HepG2 (cell line): ENCODE measurements at regions of chr18 and their contacts with region 1.

Region 1: DNA sequence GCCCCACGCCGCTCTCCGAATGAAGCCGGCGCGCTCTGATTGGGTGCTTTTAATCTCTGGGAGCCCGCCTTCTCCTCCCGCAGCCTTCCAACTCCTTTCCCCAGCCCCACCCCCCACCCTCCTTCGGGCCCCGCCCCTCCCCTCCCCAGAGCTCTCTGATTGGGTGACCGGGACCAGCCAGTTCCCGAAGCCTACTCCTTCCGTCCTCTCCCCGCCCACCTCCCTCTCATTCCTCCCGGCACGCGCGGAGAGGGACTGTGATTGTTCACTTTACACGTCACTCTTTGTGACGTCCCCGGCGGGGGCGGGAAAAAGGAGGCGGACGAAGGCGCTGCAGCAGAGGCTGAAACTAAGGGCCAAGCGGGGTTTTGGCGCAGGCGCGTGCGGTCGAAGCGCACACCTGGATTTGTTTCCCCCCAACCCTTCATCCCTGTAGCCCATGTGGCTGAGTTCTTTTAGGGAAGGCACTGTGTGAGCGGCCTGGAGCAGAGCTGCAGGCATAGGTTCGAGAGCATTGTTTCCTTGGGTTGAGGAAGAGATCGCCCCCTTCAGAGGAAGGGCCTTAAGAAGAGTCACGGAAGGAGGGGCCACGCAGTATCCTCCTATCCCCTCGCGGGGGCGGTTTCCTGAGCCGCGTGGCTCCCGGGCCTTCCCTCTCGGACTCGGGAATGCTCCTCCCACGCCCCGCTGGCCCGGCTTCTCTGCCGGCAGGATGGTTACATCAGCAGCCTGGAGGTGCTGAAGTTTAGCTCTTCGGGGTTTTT is at the start of gene MEX3C:
- DNase-seq: peak; percentile 97
- ATAC-seq: peak; percentile 84
- H3K4me3 ChIP-seq: peak within 1 kb of the TSS; percentile 75 to 99 (median 90)
- H3K27ac ChIP-seq: peak within 1 kb of the TSS; percentile 97
- H3K4me1 ChIP-seq: peaks cover 21% of the 10 kb centered on the region
- H3K27me3 ChIP-seq: no peaks in the 10 kb centered on the region
- CTCF ChIP-seq: peak; percentile 56; the same call in 1 of the 2 replicates
- EP300 ChIP-seq: no peak
- POLR2A ChIP-seq: peak; percentile 91 to 93
- RAD21 ChIP-seq: no peak; the same call in 1 of the 2 replicates
- total RNA-seq, gene MEX3C: 36.4 and 36.7 TPM in 2 replicates

Region 2: DNA sequence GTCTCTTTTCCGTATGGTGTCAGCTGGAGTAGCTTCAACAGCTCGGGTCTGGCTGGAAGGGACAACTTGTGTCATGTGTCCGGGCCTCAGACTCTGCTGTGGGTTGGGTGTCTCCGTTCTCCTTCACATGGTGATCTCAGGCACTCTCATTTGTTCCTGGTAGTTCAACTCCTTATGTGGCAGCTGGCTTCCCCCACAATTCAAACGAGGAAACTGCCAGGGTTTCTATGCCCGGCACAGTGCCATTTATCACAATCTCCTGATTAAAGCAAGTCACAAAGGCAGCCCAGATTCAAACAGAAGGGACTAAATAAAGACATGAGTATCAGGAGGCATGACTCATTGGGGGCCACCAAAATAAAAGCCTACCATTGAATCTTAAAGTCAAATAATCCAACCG is 400.7 kb before region 1 on chr18:
- CTCF ChIA-PET with region 1: no interaction called
- POLR2A ChIA-PET with region 1: no interaction called
- in situ Hi-C with region 1: no loop called
- intact Hi-C with region 1: no loop called
- DNase-seq: no peak
- ATAC-seq: no peak
- H3K4me3 ChIP-seq: no peak overlapping the region
- H3K27ac ChIP-seq: no peak overlapping the region
- H3K4me1 ChIP-seq: peaks cover 5% of the 10 kb centered on the region; the same call in 1 of the 2 replicates
- H3K27me3 ChIP-seq: no peaks in the 10 kb centered on the region
- CTCF ChIP-seq: no peak
- EP300 ChIP-seq: no peak
- POLR2A ChIP-seq: no peak
- RAD21 ChIP-seq: no peak

Region 3: DNA sequence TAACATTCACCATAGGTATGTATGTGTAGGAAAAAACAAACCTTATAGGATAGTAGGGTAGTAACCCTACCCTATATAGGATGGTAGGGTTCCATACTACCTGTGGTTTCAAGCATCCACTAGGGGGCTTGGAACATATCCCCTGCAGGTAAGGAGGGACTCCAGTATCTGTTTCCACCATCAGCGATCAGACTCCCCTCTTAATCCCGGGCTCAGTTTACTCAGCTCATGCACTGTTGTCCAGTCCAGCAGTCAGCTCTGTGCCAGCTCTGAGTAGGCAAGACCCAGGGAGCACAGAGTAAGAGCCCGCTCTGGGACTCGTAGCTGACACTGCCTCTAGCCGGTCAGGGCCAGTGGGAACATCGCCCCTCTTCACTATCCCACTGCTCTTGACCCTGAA is 62.0 kb before region 1 on chr18:
- CTCF ChIA-PET with region 1: no interaction called
- POLR2A ChIA-PET with region 1: interaction called, 5 read pairs
- in situ Hi-C with region 1: no loop called
- intact Hi-C with region 1: loop called (anchors 5 kb)
- DNase-seq: peak; percentile 23
- ATAC-seq: peak; percentile 75
- H3K4me3 ChIP-seq: no peak overlapping the region
- H3K27ac ChIP-seq: no peak overlapping the region
- H3K4me1 ChIP-seq: peaks cover 34% of the 10 kb centered on the region
- H3K27me3 ChIP-seq: peaks cover 1 to 4% of the 10 kb centered on the region in 2 experiments; a peak in 2 of 5 replicates
- CTCF ChIP-seq: peak; percentile 56
- EP300 ChIP-seq: no peak
- POLR2A ChIP-seq: no peak
- RAD21 ChIP-seq: no peak

Region 4: DNA sequence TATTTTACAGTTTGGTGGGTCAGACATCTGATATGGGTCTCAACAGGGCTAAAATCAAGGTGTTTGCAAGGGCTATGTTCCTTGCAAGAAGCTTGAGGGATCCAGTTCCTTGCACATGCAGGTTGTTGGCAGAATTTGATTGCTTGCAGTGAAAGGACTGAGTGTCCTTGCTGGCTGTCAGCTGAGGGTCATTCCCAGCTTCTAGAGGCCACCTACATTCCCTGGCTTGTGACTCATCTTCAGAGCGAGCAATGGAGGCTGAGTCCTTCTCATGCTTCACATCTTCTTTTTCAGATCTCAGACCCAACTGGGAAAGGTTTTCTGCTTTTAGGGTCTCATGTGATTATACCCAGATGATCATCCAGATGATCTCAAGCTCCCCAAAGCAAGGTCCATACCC is 12.8 kb before region 1 on chr18:
- CTCF ChIA-PET with region 1: no interaction called
- POLR2A ChIA-PET with region 1: interaction called, 17 read pairs
- in situ Hi-C with region 1: no loop called
- intact Hi-C with region 1: no loop called
- DNase-seq: no peak
- ATAC-seq: peak; percentile 47; the same call in 2 of the 3 replicates
- H3K4me3 ChIP-seq: no peak overlapping the region
- H3K27ac ChIP-seq: no peak overlapping the region
- H3K4me1 ChIP-seq: peaks cover 20% of the 10 kb centered on the region
- H3K27me3 ChIP-seq: no peaks in the 10 kb centered on the region
- CTCF ChIP-seq: no peak
- EP300 ChIP-seq: no peak
- POLR2A ChIP-seq: no peak
- RAD21 ChIP-seq: no peak

Region 5: GRCh38 chr18:51278045-51278649 is 80.3 kb after region 1 on chr18:
- CTCF ChIA-PET with region 1: no interaction called
- POLR2A ChIA-PET with region 1: interaction called, 5 read pairs
- in situ Hi-C with region 1: no loop called
- intact Hi-C with region 1: loop called (anchors 1 kb)
- DNase-seq: peak; percentile 47
- ATAC-seq: peak; percentile 77
- H3K4me3 ChIP-seq: no peak overlapping the region
- H3K27ac ChIP-seq: no peak overlapping the region
- H3K4me1 ChIP-seq: peaks cover 61% of the 10 kb centered on the region
- H3K27me3 ChIP-seq: no peaks in the 10 kb centered on the region
- CTCF ChIP-seq: peak; percentile 76
- EP300 ChIP-seq: no peak
- POLR2A ChIP-seq: no peak
- RAD21 ChIP-seq: peak; percentile 57

Region 6: DNA sequence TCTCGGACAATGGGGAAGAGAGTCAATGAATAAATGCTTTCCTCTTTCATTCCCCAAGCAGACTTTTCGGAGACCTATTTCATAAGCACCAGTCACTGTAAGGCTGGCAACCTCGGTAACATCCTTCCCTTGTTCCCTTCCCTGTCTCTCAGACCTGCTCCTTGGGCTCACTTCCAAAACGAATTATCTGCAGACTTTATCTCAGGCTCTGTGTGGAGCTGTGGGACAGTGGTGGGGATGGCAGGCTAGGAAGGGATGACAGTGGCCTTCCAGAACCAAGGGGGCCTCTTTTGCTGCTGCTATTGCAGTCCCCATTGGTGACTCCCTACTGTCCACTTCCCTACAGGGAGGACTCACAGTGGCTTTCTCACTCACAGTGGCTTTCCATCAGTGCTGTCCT is 185.3 kb after region 1 on chr18:
- CTCF ChIA-PET with region 1: no interaction called
- POLR2A ChIA-PET with region 1: no interaction called
- in situ Hi-C with region 1: no loop called
- intact Hi-C with region 1: loop called (anchors 5 kb)
- DNase-seq: no peak
- ATAC-seq: no peak
- H3K4me3 ChIP-seq: no peak overlapping the region
- H3K27ac ChIP-seq: no peak overlapping the region
- H3K4me1 ChIP-seq: no peaks in the 10 kb centered on the region
- H3K27me3 ChIP-seq: no peaks in the 10 kb centered on the region
- CTCF ChIP-seq: no peak
- EP300 ChIP-seq: no peak
- POLR2A ChIP-seq: no peak
- RAD21 ChIP-seq: no peak